OCI-LY7 (cell line): ENCODE measurements at regions of chr9 and their contacts with region 1.

Region 1: DNA sequence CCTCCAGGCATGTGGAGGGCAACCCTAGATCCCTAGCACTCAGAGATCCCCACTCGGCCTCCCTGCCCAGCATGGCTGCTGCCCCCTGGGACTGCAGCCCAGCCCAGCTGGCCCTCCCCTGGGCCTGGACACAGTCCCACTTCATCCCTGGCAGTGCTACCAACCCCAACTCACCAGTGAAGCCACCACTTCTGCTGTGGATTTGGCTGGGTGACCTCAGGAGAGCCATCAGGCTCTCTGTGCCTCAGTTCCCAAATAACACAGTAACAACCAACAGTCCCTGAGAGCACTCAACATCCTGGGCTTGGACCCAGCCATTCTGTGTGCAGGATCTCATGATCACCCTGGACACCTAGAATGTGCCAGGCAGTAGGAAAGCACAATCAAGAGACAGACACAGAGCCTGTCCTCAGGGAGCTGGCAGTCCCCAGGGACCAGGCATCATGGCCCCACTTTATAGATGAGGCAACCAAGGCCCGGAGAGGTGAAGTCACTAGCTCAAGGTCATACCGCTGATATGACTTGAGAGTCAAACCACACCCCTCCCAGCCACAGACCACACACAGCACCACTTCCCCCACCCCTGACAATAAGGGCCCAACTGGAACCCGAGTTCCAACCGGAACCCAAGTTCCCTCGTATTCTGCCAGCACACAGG is 4.7 kb upstream of the PSMB7 start:
- DNase-seq: no peak
- H3K4me3 ChIP-seq: no peak overlapping the region
- H3K27ac ChIP-seq: no peak overlapping the region
- H3K4me1 ChIP-seq: peaks cover 4% of the 10 kb centered on the region
- CTCF ChIP-seq: peak; percentile 46; the same call in 1 of the 2 replicates

Region 2: DNA sequence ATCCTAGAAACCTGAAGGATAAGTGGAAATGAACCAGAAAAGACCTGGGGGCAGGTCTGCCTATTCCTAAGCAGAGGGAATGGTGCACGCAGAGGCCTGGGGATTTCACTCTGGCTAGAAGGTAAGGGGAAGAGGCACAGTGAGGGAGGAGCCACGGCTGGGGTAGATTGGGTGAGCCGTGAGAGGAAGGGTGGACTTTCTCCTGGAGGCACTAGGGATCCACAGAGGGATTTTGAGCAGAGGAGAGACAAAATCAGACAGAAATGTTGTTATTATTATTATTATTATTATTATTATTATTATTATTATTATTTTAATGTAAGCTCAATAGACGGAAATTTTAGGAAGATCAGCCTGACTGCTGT is 27.3 kb after region 1 on chr9:
- CTCF ChIA-PET with region 1: no interaction called
- POLR2A ChIA-PET with region 1: no interaction called
- intact Hi-C with region 1: loop called (anchors 2 kb)
- DNase-seq: no peak
- H3K4me3 ChIP-seq: no peak overlapping the region
- H3K27ac ChIP-seq: no peak overlapping the region
- H3K4me1 ChIP-seq: no peaks in the 10 kb centered on the region
- CTCF ChIP-seq: no peak

Region 3: DNA sequence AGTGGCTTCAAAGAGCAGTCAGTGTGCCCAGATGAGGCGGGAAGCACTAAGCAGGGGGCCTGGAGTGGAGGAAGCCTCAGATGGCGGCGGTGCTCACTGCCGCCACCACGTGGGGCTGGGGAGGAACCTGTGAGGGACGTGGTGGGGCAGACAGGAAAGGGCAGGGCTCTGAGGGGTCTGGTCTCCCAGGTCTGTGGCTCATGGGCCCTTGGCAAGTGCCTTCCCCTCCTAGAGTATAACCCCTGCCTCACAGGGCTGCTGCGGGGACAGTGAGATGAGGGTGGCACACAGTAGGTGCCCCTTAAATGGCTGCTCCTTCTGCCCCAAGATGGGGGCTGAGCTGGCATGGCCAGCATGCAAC is 60.6 kb after region 1 on chr9:
- CTCF ChIA-PET with region 1: no interaction called
- POLR2A ChIA-PET with region 1: no interaction called
- intact Hi-C with region 1: loop called (anchors 1 kb)
- DNase-seq: peak; percentile 59
- H3K4me3 ChIP-seq: no peak overlapping the region
- H3K27ac ChIP-seq: no peak overlapping the region
- H3K4me1 ChIP-seq: peaks cover 15% of the 10 kb centered on the region
- CTCF ChIP-seq: peak; percentile 79

Region 4: GRCh38 chr9:124535846-124536245 is 115.9 kb after region 1 on chr9:
- CTCF ChIA-PET with region 1: no interaction called
- POLR2A ChIA-PET with region 1: no interaction called
- intact Hi-C with region 1: loop called (anchors 1 kb)
- DNase-seq: no peak
- H3K4me3 ChIP-seq: no peak overlapping the region
- H3K27ac ChIP-seq: no peak overlapping the region
- H3K4me1 ChIP-seq: no peaks in the 10 kb centered on the region
- CTCF ChIP-seq: no peak